Activated T-helper 2 cell treated with anti-CD3 and anti-CD28 coated beads, Interferon-gamma antibody, Interleukin-2, Interleukin-4, amounts not matched to agents 10 μg/mL and 5 μg/mL and 100 μg/mL, durations not matched to agents 14 hours and 24 hours and 36 hours (primary cell): ENCODE measurements at regions of chr17 and their contacts with region 1.

Region 1: DNA sequence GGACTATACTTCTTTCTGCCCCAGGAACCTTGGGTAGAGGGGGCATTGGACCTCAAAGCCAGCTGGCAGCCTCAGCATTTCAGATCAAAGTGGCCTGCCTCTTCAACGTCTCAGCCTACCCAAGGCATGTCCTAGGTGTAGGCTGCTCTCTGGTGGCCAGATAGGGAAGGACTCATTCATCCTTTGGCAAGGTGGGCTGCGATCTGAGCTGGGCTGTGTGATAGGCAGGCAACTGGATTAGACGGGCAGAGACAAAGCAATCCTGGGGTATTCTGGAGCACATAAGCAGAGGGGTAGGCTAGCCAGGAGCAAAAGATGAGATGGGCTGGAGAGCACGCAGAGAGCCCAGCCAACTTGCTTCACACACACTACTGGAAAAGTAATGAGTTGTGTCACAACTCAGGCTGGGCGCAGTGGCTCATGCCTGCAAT is 8.8 kb upstream of the NAGLU start:
- DNase-seq: peak; percentile 58
- H3K4me3 Mint-ChIP-seq: no peak overlapping the region
- H3K27ac Mint-ChIP-seq: no peak overlapping the region
- H3K4me1 Mint-ChIP-seq: peaks cover 26% of the 10 kb centered on the region
- H3K27me3 Mint-ChIP-seq: peaks cover 2% of the 10 kb centered on the region

Region 2: GRCh38 chr17:42312285-42313130 is 214.8 kb before region 1 on chr17:
- intact Hi-C with region 1: loop called (anchors 10 kb)
- DNase-seq: peak; percentile 72
- H3K4me3 Mint-ChIP-seq: peak overlapping the region; percentile 33
- H3K27ac Mint-ChIP-seq: peak overlapping the region; percentile 68
- H3K4me1 Mint-ChIP-seq: peaks cover 59% of the 10 kb centered on the region
- H3K27me3 Mint-ChIP-seq: no peaks in the 10 kb centered on the region